ENCODE measurements at regions of chr10 and their contacts with region 1.

Region 1: GRCh38 chr10:102503281-102504220 is at the start of gene SUFU:
- DNase-seq: peak; percentile 94 to 100 (median 98)
- ATAC-seq: peak; percentile 69
- H3K4me3 ChIP-seq: peak within 1 kb of the TSS; percentile 85 to 89
- H3K4me3 Mint-ChIP-seq: no peak within 1 kb of the TSS
- H3K27ac ChIP-seq: peak within 1 kb of the TSS; percentile 30 to 89
- H3K27ac Mint-ChIP-seq: peak within 1 kb of the TSS; percentile 88
- H3K4me1 ChIP-seq: peaks cover 28% of the 10 kb centered on the region
- H3K4me1 Mint-ChIP-seq: peaks cover 44% of the 10 kb centered on the region
- H3K27me3 ChIP-seq: no peaks in the 10 kb centered on the region
- H3K27me3 Mint-ChIP-seq: no peaks in the 10 kb centered on the region
- CTCF ChIP-seq: peak; percentile 75
- total RNA-seq, gene SUFU: 3.9 to 4.2 TPM

Region 2: GRCh38 chr10:102114861-102115618 is 388.5 kb before region 1 on chr10:
- CTCF ChIA-PET with region 1: no interaction called
- POLR2A ChIA-PET with region 1: no interaction called
- intact Hi-C with region 1: loop called in 1 of 2 experiments (anchors 5 kb)
- DNase-seq: peak; percentile 62 to 90 (median 84)
- ATAC-seq: peak; percentile 69
- H3K4me3 ChIP-seq: peak overlapping the region; percentile 57 to 75
- H3K4me3 Mint-ChIP-seq: peak overlapping the region; percentile 91
- H3K27ac ChIP-seq: peak overlapping the region; percentile 56 to 97
- H3K27ac Mint-ChIP-seq: peak overlapping the region; percentile 93
- H3K4me1 ChIP-seq: peaks cover 63% of the 10 kb centered on the region
- H3K4me1 Mint-ChIP-seq: peaks cover 71% of the 10 kb centered on the region
- H3K27me3 ChIP-seq: no peaks in the 10 kb centered on the region
- H3K27me3 Mint-ChIP-seq: no peaks in the 10 kb centered on the region
- CTCF ChIP-seq: no peak

Region 3: DNA sequence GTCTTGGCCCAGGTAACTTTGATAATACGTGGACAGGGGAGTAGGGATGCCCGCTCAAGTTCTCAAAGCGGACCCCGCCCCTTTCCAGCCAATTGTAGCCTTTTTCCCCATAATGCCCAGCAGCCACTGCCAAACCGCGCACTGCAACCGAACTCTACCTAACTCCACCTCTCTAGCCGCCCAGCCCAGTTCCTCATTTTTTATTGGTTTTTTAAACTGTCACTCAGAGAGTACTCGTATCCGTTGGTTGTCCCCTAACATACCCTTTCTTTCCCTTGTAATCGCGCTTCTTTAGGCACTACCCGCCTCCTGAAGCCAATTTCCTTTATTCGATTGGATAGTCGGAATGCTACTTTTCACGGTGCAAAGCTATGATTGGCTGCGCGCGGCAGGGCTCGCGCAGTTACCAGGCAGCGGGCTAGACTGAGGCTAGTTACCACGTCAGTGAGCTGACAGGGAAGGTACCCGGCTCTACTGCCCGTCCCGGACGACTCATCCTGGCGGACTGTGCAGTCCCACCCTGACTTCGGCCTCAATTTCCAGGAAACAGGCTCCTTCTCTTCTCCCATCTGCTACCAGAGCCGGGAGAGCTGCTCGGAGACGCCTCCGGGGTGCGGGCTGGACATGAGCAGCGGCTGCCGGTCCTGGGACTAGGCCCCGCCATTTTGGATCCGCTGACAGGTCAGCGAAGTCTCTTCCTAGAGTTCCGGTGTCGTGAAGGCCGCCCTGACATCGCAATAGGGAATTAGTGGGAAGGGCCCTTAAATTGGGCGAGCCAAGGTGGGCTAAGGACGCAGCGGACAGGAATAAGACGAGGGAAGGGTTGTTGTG is 258.2 kb before region 1 on chr10 and contains the start of gene GBF1:
- CTCF ChIA-PET with region 1: no interaction called
- POLR2A ChIA-PET with region 1: no interaction called
- intact Hi-C with region 1: loop called (anchors 1 to 5 kb)
- DNase-seq: peak; percentile 75 to 98 (median 87)
- ATAC-seq: peak; percentile 84
- H3K4me3 ChIP-seq: peak within 1 kb of the TSS; percentile 82 to 95
- H3K4me3 Mint-ChIP-seq: peak within 1 kb of the TSS; percentile 94
- H3K27ac ChIP-seq: peak within 1 kb of the TSS; percentile 89 to 93
- H3K27ac Mint-ChIP-seq: peak within 1 kb of the TSS; percentile 92
- H3K4me1 ChIP-seq: peaks cover 44% of the 10 kb centered on the region
- H3K4me1 Mint-ChIP-seq: peaks cover 54% of the 10 kb centered on the region
- H3K27me3 ChIP-seq: peaks cover 10 to 22% of the 10 kb centered on the region in 2 experiments
- H3K27me3 Mint-ChIP-seq: peaks cover 19% of the 10 kb centered on the region
- CTCF ChIP-seq: no peak
- total RNA-seq, gene GBF1: 26.7 to 31.3 TPM

Region 4: DNA sequence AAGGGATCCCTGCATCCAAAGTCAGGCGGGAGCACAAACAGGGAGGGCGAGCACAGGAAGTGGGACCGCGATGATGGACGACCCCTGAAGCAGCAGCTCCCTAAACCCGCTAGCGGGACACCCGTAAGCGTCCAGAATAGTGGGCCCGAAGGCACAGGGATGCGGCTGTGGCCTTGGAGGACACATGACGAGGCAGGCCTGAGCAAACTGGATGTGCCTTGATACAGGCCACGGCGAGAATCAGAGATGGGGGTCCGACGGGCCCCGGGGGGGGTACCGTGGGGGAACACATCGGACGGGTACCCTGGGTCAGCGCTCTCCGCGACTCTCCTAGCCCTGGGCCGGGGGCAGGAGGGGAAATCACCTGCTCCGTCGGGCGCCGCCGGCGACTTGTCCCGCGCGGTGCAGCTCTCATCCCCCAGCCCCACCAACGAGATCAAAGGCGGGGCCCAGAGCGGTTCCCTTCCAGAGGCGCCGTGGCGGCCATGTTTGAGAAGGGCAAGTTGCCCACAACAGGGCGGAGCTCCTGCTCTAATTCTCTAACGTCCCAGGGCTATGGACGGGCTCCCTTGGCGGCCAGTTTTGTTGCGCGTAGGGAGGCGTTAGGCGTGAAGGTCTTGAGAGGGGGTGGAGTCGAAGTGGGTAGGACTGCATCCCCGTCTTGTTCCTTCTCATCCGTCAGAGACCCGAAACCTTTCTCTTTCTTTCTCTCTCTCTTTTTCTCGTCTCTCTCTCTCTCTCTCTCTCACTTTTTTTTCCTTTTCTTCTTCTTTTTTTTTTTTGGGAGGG is 71.2 kb before region 1 on chr10 and contains the start of gene CUEDC2:
- CTCF ChIA-PET with region 1: interaction called, 3 read pairs
- POLR2A ChIA-PET with region 1: no interaction called
- intact Hi-C with region 1: loop called (anchors 1 kb)
- DNase-seq: peak; percentile 88 to 98 (median 93)
- ATAC-seq: peak; percentile 93
- H3K4me3 ChIP-seq: peak within 1 kb of the TSS; percentile 76 to 96
- H3K4me3 Mint-ChIP-seq: peak within 1 kb of the TSS; percentile 95
- H3K27ac ChIP-seq: peak within 1 kb of the TSS; percentile 62 to 67
- H3K27ac Mint-ChIP-seq: peak within 1 kb of the TSS; percentile 89
- H3K4me1 ChIP-seq: peaks cover 48% of the 10 kb centered on the region
- H3K4me1 Mint-ChIP-seq: peaks cover 49% of the 10 kb centered on the region
- H3K27me3 ChIP-seq: no peaks in the 10 kb centered on the region
- H3K27me3 Mint-ChIP-seq: no peaks in the 10 kb centered on the region
- CTCF ChIP-seq: no peak
- total RNA-seq, gene CUEDC2: 24.2 to 27.0 TPM

Region 5: DNA sequence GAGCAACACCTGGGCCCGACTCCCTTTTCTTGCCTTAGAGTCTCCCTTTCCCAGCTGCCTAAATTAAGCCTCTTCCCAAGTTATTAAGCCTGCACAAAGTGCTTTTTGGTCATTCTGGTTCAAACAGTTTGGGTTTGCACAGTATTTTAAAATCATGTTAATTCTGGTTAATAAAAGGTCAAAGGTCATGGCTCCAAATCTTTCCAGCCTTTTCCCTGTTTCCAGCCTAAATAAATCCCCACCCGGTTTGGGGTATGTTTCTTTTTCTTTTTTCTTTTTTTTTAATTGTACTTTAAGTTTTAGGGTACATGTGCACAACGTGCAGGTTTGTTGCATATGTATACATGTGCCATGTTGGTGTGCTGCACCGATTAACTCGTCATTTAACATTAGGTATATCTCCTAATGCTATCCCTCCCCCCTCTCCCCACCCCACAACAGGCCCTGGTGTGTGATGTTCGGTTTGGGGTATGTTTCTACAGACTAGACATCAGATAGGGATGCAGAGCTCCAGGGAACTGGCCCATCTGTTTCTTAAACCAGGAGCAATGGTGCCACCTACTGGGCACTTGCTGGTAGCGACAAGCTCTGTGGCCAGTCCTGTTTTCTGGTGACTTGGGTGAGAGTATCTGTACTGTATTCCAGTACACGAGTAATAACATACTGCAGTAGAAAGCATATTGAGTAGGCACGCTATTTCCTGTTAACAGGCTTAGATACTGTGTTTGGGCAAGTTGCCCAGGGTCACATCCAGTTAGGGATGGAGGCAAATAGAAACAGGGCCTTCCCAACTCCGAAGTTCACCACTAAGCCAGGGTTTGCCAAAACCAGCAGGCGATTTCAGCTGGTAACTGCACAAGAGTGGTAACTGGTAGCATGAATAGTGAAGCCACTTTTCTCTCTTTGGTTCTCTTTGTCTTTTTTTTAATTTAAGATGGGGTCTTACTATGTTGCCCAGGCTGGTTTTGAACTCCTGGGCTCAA is 80.2 kb after region 1 on chr10:
- CTCF ChIA-PET with region 1: interaction called, 35 read pairs
- POLR2A ChIA-PET with region 1: interaction called, 10 read pairs
- intact Hi-C with region 1: loop called (anchors 1 kb)
- DNase-seq: peak; percentile 67 to 87 (median 82)
- ATAC-seq: peak; percentile 98
- H3K4me3 ChIP-seq: no peak overlapping the region
- H3K4me3 Mint-ChIP-seq: no peak overlapping the region
- H3K27ac ChIP-seq: no peak overlapping the region
- H3K27ac Mint-ChIP-seq: no peak overlapping the region
- H3K4me1 ChIP-seq: no peaks in the 10 kb centered on the region
- H3K4me1 Mint-ChIP-seq: peaks cover 4% of the 10 kb centered on the region
- H3K27me3 ChIP-seq: no peaks in the 10 kb centered on the region
- H3K27me3 Mint-ChIP-seq: no peaks in the 10 kb centered on the region
- CTCF ChIP-seq: peak; percentile 78

Region 6: GRCh38 chr10:102743588-102744373 is 240.2 kb after region 1 on chr10 and contains the start of gene WBP1L:
- CTCF ChIA-PET with region 1: interaction called, 3 read pairs
- POLR2A ChIA-PET with region 1: no interaction called
- intact Hi-C with region 1: loop called (anchors 1 kb)
- DNase-seq: peak; percentile 90 to 99 (median 95)
- ATAC-seq: peak; percentile 96
- H3K4me3 ChIP-seq: peak within 1 kb of the TSS; percentile 87 to 99
- H3K4me3 Mint-ChIP-seq: peak within 1 kb of the TSS; percentile 92
- H3K27ac ChIP-seq: peak within 1 kb of the TSS; percentile 64 to 91
- H3K27ac Mint-ChIP-seq: peak within 1 kb of the TSS; percentile 90
- H3K4me1 ChIP-seq: peaks cover 34% of the 10 kb centered on the region
- H3K4me1 Mint-ChIP-seq: peaks cover 50% of the 10 kb centered on the region
- H3K27me3 ChIP-seq: no peaks in the 10 kb centered on the region
- H3K27me3 Mint-ChIP-seq: no peaks in the 10 kb centered on the region
- CTCF ChIP-seq: no peak
- total RNA-seq, gene WBP1L: 5.5 to 5.9 TPM

Region 7: DNA sequence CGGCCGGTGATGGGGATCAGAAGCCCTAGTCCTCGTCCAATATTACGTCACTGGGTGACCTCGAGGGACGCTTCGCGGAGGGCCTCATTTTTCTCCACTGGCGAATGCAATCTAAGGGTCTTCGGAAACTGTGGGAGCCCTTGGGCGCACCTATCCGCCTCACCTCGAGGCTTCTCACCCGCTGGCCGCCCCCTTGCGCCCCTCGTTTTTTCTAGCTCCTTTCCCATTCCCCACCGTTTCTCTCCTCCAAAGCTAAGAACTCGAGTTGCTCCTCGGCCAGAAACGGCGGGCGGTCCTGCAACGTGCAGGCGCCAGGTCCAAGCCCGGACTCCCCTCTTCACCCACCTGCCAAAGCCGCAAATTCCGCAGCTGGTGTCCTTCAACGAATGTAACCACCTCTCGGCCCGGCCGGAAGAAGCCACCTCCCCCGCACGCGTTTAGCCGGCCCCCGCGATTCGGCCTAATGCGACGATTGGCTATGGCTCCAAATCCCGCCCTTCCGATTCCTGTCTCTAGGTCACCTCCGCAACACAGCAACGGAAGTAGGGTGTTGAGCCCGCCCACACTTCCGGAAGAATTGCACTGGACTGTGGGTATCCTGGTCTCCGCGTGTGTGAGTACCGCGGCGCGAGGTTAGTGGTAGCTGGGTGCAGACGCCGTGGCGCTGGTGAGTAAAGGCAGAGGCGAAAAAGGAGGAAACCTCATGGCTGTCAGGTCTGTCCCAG is 892.7 kb after region 1 on chr10 and contains the starts of genes ATP5MK and PDCD11:
- CTCF ChIA-PET with region 1: no interaction called
- POLR2A ChIA-PET with region 1: no interaction called
- intact Hi-C with region 1: loop called in 1 of 2 experiments (anchors 10 kb)
- DNase-seq: peak; percentile 86 to 97 (median 94)
- ATAC-seq: peak; percentile 97
- H3K4me3 ChIP-seq: peak within 1 kb of the TSS; percentile 88 to 99
- H3K4me3 Mint-ChIP-seq: peak within 1 kb of the TSS; percentile 97
- H3K27ac ChIP-seq: peak within 1 kb of the TSS; percentile 66 to 69
- H3K27ac Mint-ChIP-seq: peak within 1 kb of the TSS; percentile 96
- H3K4me1 ChIP-seq: peaks cover 39% of the 10 kb centered on the region
- H3K4me1 Mint-ChIP-seq: peaks cover 64% of the 10 kb centered on the region
- H3K27me3 ChIP-seq: no peaks in the 10 kb centered on the region
- H3K27me3 Mint-ChIP-seq: no peaks in the 10 kb centered on the region
- CTCF ChIP-seq: no peak
- total RNA-seq, gene ATP5MK: 93.4 to 97.3 TPM
- total RNA-seq, gene PDCD11: 13.7 to 15.0 TPM